ENCODE measurements at regions of chr11 and their contacts with region 1.

Region 1: GRCh38 chr11:69000831-69001242 is 12.2 kb downstream of the MRGPRF start:
- DNase-seq: peak in 1 of 2 donors; percentile 48
- ATAC-seq: peak; percentile 47

Region 2: DNA sequence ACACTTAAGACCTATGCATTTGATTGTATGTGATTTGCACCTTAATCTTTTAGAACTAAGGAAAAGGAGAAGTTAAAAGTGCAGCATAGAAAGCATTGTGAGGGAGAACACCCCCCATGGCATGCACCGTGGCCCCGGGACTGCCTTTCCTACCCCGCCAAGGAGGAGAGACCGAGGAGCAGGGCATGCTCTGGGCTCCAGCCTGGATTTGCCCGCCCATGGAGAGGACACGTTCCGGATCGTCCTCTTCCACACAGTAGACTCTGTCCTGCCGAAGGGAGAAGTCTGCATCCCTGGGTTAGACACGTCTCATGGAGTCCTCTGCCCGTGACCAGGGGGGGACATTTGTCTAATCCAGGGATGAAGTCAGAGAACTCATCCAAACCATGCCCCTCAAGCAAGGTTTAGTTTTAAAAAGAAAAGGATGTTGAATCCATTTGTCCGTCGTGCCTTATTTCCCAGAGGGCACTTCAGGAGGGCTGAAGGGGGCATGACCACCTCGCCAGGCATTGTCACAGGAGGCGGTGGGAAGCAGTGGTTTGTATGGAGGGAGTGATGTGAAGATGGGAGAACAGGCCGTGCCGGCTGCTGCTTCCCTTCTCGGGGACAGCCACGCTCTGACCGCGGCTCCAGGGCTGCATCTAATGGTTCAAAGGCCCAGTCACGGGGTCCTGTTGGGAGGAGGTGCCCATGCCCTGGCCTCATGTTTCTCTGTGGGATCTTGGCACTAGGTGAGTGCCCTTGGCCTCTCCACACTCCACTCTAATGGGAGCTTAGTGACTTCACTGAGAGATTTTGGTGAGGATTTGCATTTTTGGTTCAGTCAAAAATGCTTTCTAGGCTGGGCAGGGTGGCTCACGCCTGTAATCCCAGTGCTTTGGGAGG is 382.7 kb before region 1 on chr11:
- intact Hi-C with region 1: no loop called
- DNase-seq: no peak
- ATAC-seq: peak; percentile 35

Region 3: GRCh38 chr11:68946465-68947036 is 54.3 kb before region 1 on chr11:
- intact Hi-C with region 1: loop called in 1 of 2 experiments (anchors 10 kb)
- DNase-seq: no peak
- ATAC-seq: peak; percentile 31

Region 4: DNA sequence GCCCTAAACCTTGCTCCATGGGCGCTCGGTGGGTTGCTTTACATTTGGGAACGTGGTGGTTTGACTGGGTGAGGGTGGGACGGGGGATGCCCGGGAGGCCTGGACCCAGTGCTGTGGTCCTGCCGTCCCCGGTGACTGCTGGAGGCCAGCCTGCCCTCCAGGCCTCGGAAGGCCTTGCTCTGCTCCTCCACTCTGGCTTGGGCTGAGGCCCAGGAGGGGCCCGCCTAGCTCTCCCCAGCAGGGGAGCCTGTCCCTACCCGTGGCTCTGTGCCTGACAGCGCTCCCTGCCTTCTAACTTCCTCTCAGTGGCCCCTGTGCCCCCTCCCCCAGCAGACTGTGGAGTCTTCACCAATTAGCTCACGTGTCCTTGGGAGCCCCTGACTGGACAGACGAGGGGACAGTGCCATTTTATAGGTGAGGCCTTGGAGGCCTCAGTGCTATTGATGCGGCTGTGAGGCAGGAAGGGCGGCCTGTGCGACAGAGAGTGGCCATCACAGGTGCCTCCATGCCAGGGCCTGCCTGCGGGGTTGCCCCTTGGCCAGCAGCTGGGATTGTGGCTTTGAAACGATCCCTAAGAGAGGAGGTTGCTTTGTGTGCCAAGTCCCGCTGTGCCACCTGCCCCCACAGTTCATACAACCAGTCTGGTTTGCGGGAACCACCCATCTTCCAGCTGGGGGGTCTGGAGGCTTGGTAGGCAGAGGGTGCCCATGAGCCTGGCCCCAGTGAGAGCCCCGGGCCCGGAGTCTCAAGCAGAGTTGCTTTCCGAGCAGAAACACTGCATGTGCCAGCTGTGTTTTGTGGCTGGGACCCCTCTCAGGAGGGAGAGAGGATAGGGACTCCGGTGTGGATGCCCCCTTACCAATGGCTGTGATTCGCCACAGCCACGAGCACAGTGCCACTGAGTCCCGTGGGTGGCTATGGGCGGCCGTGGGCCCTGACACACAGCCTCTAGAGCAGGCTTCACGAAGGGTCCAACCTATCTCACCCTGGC is 65.6 kb after region 1 on chr11:
- intact Hi-C with region 1: no loop called
- DNase-seq: no peak
- ATAC-seq: no peak

Region 5: GRCh38 chr11:69186312-69187260 is 185.7 kb after region 1 on chr11:
- intact Hi-C with region 1: no loop called
- DNase-seq: no peak
- ATAC-seq: no peak